ENCODE measurements at regions of chr9 and their contacts with region 1.

Region 1: DNA sequence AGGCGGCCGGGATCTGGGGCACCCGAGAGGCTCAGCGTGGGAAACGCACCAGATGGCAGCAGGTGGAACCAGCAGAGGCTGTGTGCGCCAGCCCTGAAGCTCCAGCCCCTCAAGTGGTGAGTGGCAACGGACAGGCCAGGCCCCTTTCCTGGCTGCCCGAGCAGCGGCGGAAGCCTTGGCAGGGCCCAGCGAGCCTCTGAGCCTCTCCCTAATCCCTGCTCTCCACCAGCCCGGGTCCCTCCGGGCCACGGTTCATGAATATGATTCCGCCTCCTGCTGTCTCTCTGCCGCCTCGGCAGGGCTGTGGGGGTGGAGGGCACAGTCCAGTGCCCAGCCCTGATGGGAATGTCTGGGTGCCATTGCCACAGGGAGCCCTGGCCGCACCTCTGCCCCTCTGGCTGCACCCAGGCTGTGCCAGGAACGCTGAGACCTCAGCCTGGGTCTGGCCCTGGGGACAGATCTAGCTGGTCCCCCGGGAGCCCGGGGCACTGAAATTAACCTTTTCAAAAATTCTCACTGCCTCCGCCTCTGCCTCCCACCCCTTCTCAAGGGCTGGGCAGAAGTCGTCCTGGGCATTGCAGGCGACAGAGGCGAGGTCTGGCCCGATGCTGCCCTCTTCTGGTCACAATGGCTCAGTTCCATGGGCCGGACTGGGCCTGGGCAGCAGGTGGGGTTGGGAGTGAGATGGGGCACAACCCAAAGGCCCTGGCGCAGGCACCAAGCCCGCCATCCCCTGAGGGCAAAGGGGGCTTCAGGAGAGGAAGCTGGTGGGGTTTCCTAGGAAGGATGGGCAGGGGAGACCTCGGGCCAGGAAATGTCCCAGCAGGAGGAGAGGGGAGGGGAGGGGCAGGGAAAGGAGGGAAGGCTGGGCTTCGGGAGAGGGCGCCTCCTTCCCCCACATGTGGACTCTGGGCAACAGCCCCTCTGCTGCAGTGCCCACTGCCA is 20.3 kb downstream of the CCDC187 start:
- DNase-seq: no peak
- H3K4me3 ChIP-seq: no peak overlapping the region
- CTCF ChIP-seq: peak; percentile 93

Region 2: GRCh38 chr9:136133191-136133958 is 150.2 kb before region 1 on chr9:
- CTCF ChIA-PET with region 1: interaction called, 13 read pairs
- POLR2A ChIA-PET with region 1: no interaction called
- DNase-seq: no peak
- H3K4me3 ChIP-seq: peak overlapping the region; percentile 39
- CTCF ChIP-seq: peak; percentile 71

Region 3: DNA sequence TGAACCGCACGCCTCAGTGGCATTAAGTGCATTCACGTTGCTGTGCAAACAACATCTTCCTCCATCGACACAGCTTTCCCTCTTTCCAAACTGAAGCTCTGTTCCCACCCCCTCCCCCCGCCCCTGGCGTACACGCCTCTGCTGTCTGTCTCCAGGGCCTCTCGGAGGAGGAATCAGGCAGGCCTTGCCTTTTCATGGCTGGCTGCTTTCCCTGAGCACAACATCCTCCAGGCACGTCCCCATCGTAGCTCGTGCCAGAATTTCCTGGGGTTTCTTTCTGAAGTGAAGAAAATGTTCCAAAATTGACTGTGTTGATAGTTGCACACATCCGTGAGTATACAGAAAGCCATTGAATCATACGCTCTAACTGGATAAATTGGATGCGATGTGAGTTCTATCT is 142.6 kb before region 1 on chr9:
- CTCF ChIA-PET with region 1: interaction called, 15 read pairs
- POLR2A ChIA-PET with region 1: no interaction called
- DNase-seq: no peak
- H3K4me3 ChIP-seq: no peak overlapping the region
- CTCF ChIP-seq: no peak

Region 4: GRCh38 chr9:136170006-136170901 is 113.3 kb before region 1 on chr9:
- CTCF ChIA-PET with region 1: interaction called, 36 read pairs
- POLR2A ChIA-PET with region 1: no interaction called
- DNase-seq: no peak
- H3K4me3 ChIP-seq: no peak overlapping the region
- CTCF ChIP-seq: peak; percentile 76

Region 5: DNA sequence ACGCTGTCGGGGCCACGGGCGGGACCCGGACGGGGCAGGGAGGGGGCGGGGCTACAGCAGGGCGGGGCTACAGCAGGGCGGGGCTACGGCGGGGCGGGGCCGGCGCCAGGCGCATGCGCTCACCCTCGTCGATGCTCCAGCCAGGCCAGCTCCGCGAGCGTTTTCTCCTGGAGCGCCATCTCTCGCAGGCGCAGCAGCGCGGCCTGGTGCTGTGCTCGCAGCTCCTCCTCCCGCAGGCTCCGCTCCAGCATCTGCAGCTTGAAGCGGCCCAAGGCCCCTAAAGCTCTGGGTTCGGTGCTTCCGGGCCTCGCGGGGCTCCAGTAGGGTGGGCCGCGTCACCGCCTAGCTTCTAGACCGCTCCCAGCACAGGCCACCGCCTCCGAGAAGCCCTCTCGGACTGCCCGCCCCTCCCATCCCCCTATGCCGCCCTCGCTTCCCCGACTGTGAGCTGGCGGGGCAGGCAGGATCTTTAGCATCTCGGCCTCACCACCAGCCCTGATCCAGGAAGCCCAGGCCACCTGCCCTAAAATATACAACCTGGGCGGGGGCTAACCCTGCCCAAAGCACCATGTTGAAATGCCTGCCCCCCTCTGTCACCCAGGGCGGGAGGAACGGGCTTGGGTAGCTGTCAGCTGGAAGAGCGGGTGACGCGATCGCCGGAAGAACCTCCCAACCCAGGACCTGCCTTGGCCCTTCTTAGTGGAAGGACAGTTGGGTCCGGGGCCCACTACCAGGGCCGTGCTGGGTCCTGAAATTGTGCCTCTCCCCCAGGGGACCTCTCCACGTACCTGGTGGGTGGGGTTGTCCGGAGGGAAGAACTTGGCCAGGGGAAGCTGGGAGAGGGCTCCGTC is 16.1 kb before region 1 on chr9:
- CTCF ChIA-PET with region 1: interaction called, 30 read pairs
- POLR2A ChIA-PET with region 1: interaction called, 3 read pairs
- DNase-seq: peak; percentile 10
- H3K4me3 ChIP-seq: peak overlapping the region; percentile 58
- CTCF ChIP-seq: peak; percentile 49

Region 6: GRCh38 chr9:136297016-136297691 is 13.6 kb after region 1 on chr9:
- CTCF ChIA-PET with region 1: interaction called, 10 read pairs
- POLR2A ChIA-PET with region 1: interaction called, 4 read pairs
- DNase-seq: no peak
- H3K4me3 ChIP-seq: no peak overlapping the region
- CTCF ChIP-seq: no peak

Region 7: GRCh38 chr9:136313111-136314055 is 29.8 kb after region 1 on chr9:
- CTCF ChIA-PET with region 1: no interaction called
- POLR2A ChIA-PET with region 1: no interaction called
- DNase-seq: no peak
- H3K4me3 ChIP-seq: no peak overlapping the region
- CTCF ChIP-seq: no peak

Measured in AG04449 (cell line).